Activated CD4-positive, alpha-beta T cell treated with anti-CD3 and anti-CD28 coated beads, Interleukin-2, amount 10 ng/mL, durations not matched to agents 24 days and 14 days (primary cell): ENCODE measurements at regions of chr12 and their contacts with region 1.

Region 1: DNA sequence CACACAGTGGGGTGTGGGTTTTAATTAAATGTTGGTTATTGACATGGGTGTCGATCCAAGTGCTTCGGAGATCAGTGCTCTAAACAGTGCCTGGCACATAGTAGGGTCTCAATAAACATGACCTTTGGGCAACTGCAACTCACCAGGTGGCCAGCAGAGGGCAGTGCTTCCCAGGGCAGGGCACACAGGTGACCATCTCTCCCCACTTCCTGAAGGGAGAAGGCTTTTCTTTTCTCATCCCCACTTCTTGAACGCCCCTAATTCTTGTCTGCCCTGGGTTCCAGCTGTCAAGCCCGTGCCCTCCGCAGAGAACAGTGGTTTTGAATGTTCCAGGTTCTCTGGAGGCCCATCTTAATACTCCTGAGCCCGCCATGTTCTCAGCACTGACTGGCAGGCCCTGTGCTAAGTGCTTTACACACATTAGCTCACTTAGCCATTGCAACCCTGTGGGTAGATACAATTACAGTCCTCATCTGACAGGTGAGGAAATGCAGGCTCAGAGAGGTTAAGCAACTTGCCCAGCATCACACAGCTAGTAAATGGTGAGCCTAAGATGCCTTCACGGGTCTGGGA is 16.3 kb downstream of the RAPGEF3 start:
- DNase-seq: peak; percentile 93
- H3K4me3 Mint-ChIP-seq: no peak overlapping the region
- H3K27ac Mint-ChIP-seq: no peak overlapping the region
- H3K4me1 Mint-ChIP-seq: peaks cover 10% of the 10 kb centered on the region
- H3K27me3 Mint-ChIP-seq: peaks cover 5% of the 10 kb centered on the region

Region 2: GRCh38 chr12:47758834-47759690 is 16.7 kb after region 1 on chr12 and contains the start of gene RAPGEF3:
- intact Hi-C with region 1: loop called (anchors 2 kb)
- DNase-seq: peak; percentile 91
- H3K4me3 Mint-ChIP-seq: peak within 1 kb of the TSS; percentile 82
- H3K27ac Mint-ChIP-seq: peak within 1 kb of the TSS; percentile 60
- H3K4me1 Mint-ChIP-seq: peaks cover 59% of the 10 kb centered on the region
- H3K27me3 Mint-ChIP-seq: peaks cover 2% of the 10 kb centered on the region
- total RNA-seq, gene RAPGEF3: 3.6 and 4.5 TPM in 2 replicates

Region 3: GRCh38 chr12:47767216-47767724 is 24.9 kb after region 1 on chr12:
- intact Hi-C with region 1: loop called (anchors 1 kb)
- DNase-seq: peak; percentile 90
- H3K4me3 Mint-ChIP-seq: no peak overlapping the region
- H3K27ac Mint-ChIP-seq: no peak overlapping the region
- H3K4me1 Mint-ChIP-seq: peaks cover 12% of the 10 kb centered on the region
- H3K27me3 Mint-ChIP-seq: peaks cover 14% of the 10 kb centered on the region

Region 4: GRCh38 chr12:47779301-47779942 is 37.1 kb after region 1 on chr12:
- intact Hi-C with region 1: loop called (anchors 1 kb)
- DNase-seq: peak; percentile 97
- H3K4me3 Mint-ChIP-seq: no peak overlapping the region
- H3K27ac Mint-ChIP-seq: peak overlapping the region; percentile 64
- H3K4me1 Mint-ChIP-seq: peaks cover 43% of the 10 kb centered on the region
- H3K27me3 Mint-ChIP-seq: no peaks in the 10 kb centered on the region

Region 5: DNA sequence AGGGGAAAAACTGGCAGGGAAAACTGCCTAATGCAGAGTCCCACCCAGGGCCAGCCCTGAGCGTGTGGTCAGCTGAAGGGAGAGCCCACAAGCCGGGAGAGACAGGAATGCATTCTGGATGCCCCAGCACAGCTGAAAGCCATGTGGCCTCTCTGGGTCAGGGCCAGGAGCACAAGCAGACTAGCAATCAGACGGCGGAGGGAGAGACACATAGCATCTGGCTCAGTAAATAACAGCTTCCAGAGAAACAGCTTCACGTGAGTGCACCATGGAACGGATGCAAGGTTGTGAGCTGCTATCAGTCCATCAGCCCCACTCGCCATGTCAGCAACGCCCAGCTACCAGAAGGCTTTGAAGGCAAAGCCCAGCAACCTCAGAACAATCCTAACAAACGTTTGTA is 192.8 kb after region 1 on chr12:
- intact Hi-C with region 1: no loop called
- DNase-seq: no peak
- H3K4me3 Mint-ChIP-seq: no peak overlapping the region
- H3K27ac Mint-ChIP-seq: no peak overlapping the region
- H3K4me1 Mint-ChIP-seq: no peaks in the 10 kb centered on the region
- H3K27me3 Mint-ChIP-seq: peaks cover 22% of the 10 kb centered on the region